Naive thymus-derived CD4-positive, alpha-beta T cell (primary cell): ENCODE measurements at regions of chr12 and their contacts with region 1.

Region 1: DNA sequence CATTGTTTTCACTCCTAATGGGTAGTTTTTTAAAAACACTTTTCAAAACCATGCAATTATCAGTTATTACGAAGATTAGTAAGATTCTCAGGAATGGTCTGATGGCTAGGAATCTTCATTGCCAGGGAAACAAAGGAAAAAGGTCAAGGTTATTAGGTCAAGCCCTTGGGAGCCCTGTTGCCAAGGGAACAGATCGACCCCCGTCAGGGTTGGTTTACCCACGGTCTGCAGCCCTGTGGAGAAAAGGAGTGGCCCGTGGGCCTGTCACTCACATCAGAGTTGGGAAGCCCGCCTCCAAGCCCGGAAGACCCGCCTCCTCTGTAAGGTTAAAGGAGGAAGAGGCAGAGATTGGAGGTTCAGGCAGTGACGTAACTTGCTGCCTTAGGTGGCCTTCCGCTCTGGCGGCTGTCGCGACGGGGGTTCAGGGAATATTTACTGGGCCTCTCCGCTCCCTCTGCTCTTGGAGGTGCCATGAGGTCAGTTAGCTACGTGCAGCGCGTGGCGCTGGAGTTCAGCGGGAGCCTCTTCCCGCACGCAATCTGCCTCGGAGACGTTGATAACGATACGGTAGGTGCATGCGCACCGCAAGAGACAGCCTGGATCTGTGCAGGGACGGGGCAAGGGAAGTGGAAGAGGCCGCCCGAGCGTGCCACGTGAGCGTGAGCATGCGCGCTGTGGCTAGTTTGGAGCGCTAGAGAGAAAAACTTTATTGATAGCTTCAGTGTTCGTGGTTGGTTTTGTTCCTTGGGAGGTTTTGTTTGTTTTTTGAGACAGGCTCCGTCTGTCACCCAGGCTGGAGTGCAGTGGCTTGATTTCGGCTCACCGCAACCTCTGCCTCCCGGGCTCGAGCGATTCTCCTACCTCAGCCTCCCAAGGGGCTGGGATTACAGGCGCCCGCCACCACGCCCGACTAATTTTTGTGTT is at the start of gene ITFG2:
- DNase-seq: peak; percentile 83 to 98 (median 98)
- ATAC-seq: peak; percentile 97
- H3K4me3 ChIP-seq: peak within 1 kb of the TSS; percentile 97
- H3K4me3 Mint-ChIP-seq: peak within 1 kb of the TSS; percentile 81 to 100 (median 99)
- H3K27ac ChIP-seq: peak within 1 kb of the TSS; percentile 88
- H3K27ac Mint-ChIP-seq: peak within 1 kb of the TSS; percentile 97 to 100 (median 100)
- H3K4me1 ChIP-seq: peaks cover 5 to 15% of the 10 kb centered on the region in 2 donors
- H3K4me1 Mint-ChIP-seq: peaks cover 20 to 41% (median 38%) of the 10 kb centered on the region in 7 donors
- H3K27me3 ChIP-seq: no peaks in the 10 kb centered on the region
- H3K27me3 Mint-ChIP-seq: no peaks in the 10 kb centered on the region
- total RNA-seq, gene ITFG2: 50.4 to 156 (median 95.6) TPM

Region 2: GRCh38 chr12:1804545-1805332 is 1007.8 kb before region 1 on chr12:
- CTCF ChIA-PET with region 1: no interaction called
- POLR2A ChIA-PET with region 1: no interaction called
- intact Hi-C with region 1: loop called in 1 of 2 experiments (anchors 1 kb)
- DNase-seq: peak; percentile 58 to 86 (median 79)
- ATAC-seq: peak; percentile 98
- H3K4me3 ChIP-seq: peak overlapping the region; percentile 26
- H3K4me3 Mint-ChIP-seq: peak overlapping the region in 5 of 10 donors; percentile 21 to 44 (median 29)
- H3K27ac ChIP-seq: peak overlapping the region; percentile 63
- H3K27ac Mint-ChIP-seq: peak overlapping the region in 8 of 9 donors; percentile 55 to 90 (median 76)
- H3K4me1 ChIP-seq: peaks cover 6 to 7% of the 10 kb centered on the region in 2 donors
- H3K4me1 Mint-ChIP-seq: peaks cover 5 to 12% (median 6%) of the 10 kb centered on the region in 7 donors
- H3K27me3 ChIP-seq: no peaks in the 10 kb centered on the region
- H3K27me3 Mint-ChIP-seq: no peaks in the 10 kb centered on the region

Region 3: DNA sequence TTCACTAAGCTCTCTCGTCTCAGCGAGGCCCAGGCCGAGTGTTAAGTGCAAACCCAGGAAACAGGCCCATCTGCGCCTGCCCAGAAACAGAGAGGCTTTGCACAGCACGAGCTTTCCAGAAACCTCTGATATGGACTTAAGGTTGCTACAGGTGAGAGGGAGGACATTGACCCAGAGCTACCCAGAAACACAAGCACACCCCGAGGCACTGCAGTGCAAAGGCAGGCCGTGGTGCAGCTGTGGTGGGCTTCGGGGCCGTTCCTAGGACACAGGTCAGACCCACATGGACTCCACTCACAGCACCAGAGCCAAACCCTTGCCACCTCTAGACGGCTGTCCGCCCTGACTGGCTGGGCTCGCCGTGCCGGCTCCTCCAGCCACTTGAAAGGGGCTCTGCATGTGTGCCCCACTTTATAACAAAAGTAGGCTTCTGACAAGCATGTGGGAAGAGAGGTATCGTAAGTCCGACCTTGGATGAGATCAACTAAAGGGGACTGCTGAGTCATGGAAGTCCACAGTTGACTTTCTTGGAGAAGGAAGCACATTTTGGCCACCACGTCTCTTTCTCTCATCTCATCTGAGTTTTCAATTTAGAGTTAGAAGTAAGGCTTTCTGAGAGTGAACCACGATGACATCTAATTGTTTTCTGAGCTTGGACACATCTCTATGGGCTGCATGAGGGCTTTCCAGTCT is 932.3 kb before region 1 on chr12:
- CTCF ChIA-PET with region 1: no interaction called
- POLR2A ChIA-PET with region 1: no interaction called
- intact Hi-C with region 1: no loop called
- DNase-seq: no peak
- ATAC-seq: no peak
- H3K4me3 ChIP-seq: no peak overlapping the region
- H3K4me3 Mint-ChIP-seq: no peak overlapping the region
- H3K27ac ChIP-seq: no peak overlapping the region
- H3K27ac Mint-ChIP-seq: no peak overlapping the region
- H3K4me1 ChIP-seq: no peaks in the 10 kb centered on the region
- H3K4me1 Mint-ChIP-seq: no peaks in the 10 kb centered on the region
- H3K27me3 ChIP-seq: no peaks in the 10 kb centered on the region
- H3K27me3 Mint-ChIP-seq: peaks cover 0 to 10% (median 2%) of the 10 kb centered on the region in 5 donors

Region 4: GRCh38 chr12:2682296-2683251 is 130.0 kb before region 1 on chr12:
- CTCF ChIA-PET with region 1: interaction called, 6 read pairs
- POLR2A ChIA-PET with region 1: interaction called, 4 read pairs
- intact Hi-C with region 1: loop called (anchors 1 kb)
- DNase-seq: peak in 7 of 9 donors; percentile 37 to 70 (median 59)
- ATAC-seq: peak; percentile 71
- H3K4me3 ChIP-seq: no peak overlapping the region
- H3K4me3 Mint-ChIP-seq: peak overlapping the region in 3 of 10 donors; percentile 43 to 67 (median 47)
- H3K27ac ChIP-seq: no peak overlapping the region
- H3K27ac Mint-ChIP-seq: peak overlapping the region; percentile 76 to 98 (median 88)
- H3K4me1 ChIP-seq: no peaks in the 10 kb centered on the region
- H3K4me1 Mint-ChIP-seq: peaks cover 5 to 12% (median 9%) of the 10 kb centered on the region in 7 donors
- H3K27me3 ChIP-seq: no peaks in the 10 kb centered on the region
- H3K27me3 Mint-ChIP-seq: no peaks in the 10 kb centered on the region

Region 5: GRCh38 chr12:2752676-2753371 is 59.7 kb before region 1 on chr12:
- CTCF ChIA-PET with region 1: no interaction called
- POLR2A ChIA-PET with region 1: no interaction called
- intact Hi-C with region 1: loop called (anchors 1 to 2 kb)
- DNase-seq: peak; percentile 62 to 89 (median 80)
- ATAC-seq: peak; percentile 100
- H3K4me3 ChIP-seq: no peak overlapping the region
- H3K4me3 Mint-ChIP-seq: no peak overlapping the region
- H3K27ac ChIP-seq: no peak overlapping the region
- H3K27ac Mint-ChIP-seq: peak overlapping the region in 1 of 9 donors; percentile 23
- H3K4me1 ChIP-seq: no peaks in the 10 kb centered on the region
- H3K4me1 Mint-ChIP-seq: peaks cover 0 to 8% (median 0%) of the 10 kb centered on the region in 7 donors
- H3K27me3 ChIP-seq: no peaks in the 10 kb centered on the region
- H3K27me3 Mint-ChIP-seq: peaks cover 30 to 61% (median 44%) of the 10 kb centered on the region in 5 donors

Region 6: DNA sequence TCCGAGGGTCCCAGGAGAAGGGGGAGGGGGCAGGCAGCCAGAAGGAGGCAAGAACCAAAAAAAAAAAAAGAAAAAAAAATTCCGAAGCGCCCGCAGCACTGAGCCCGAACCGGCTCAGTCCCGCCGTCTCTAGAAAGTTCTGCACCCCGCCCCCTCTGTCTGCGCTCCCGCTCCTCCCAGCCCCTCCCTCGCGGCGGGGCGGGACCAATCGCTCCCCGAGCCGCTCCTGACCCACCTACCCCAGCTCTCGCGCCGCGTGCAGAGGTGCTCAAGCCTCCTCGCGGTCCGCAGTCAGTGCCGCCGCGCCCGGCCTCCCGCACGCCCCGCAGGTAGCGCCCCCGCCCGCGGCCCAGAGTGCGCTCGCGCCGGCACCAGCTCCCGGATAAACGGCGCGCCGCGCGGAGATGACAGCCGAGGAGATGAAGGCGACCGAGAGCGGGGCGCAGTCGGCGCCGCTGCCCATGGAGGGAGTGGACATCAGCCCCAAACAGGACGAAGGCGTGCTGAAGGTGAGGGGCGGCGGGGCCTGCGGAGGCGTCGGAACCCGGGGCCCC is 17.7 kb before region 1 on chr12 and contains the start of gene FKBP4:
- CTCF ChIA-PET with region 1: interaction called, 4 read pairs
- POLR2A ChIA-PET with region 1: interaction called, 65 read pairs
- intact Hi-C with region 1: loop called (anchors 1 kb)
- DNase-seq: peak; percentile 77 to 92 (median 86)
- ATAC-seq: peak; percentile 95
- H3K4me3 ChIP-seq: peak within 1 kb of the TSS; percentile 95
- H3K4me3 Mint-ChIP-seq: peak within 1 kb of the TSS; percentile 88 to 97 (median 94)
- H3K27ac ChIP-seq: peak within 1 kb of the TSS; percentile 73
- H3K27ac Mint-ChIP-seq: peak within 1 kb of the TSS; percentile 48 to 93 (median 84)
- H3K4me1 ChIP-seq: peaks cover 8 to 11% of the 10 kb centered on the region in 2 donors
- H3K4me1 Mint-ChIP-seq: peaks cover 17 to 37% (median 31%) of the 10 kb centered on the region in 7 donors
- H3K27me3 ChIP-seq: no peaks in the 10 kb centered on the region
- H3K27me3 Mint-ChIP-seq: peaks cover 0 to 21% (median 0%) of the 10 kb centered on the region in 5 donors
- total RNA-seq, gene FKBP4: 47.4 to 95.4 (median 54.6) TPM

Region 7: GRCh38 chr12:2890388-2891239 is 78.1 kb after region 1 on chr12 and contains the start of gene TULP3:
- CTCF ChIA-PET with region 1: interaction called, 3 read pairs
- POLR2A ChIA-PET with region 1: interaction called, 3 read pairs
- intact Hi-C with region 1: loop called (anchors 1 kb)
- DNase-seq: peak; percentile 95 to 98 (median 97)
- ATAC-seq: peak; percentile 99
- H3K4me3 ChIP-seq: peak within 1 kb of the TSS; percentile 96
- H3K4me3 Mint-ChIP-seq: peak within 1 kb of the TSS; percentile 93 to 100 (median 98)
- H3K27ac ChIP-seq: peak within 1 kb of the TSS; percentile 89
- H3K27ac Mint-ChIP-seq: peak within 1 kb of the TSS; percentile 81 to 97 (median 97)
- H3K4me1 ChIP-seq: peaks cover 3 to 8% of the 10 kb centered on the region in 2 donors
- H3K4me1 Mint-ChIP-seq: peaks cover 15 to 35% (median 31%) of the 10 kb centered on the region in 7 donors
- H3K27me3 ChIP-seq: no peaks in the 10 kb centered on the region
- H3K27me3 Mint-ChIP-seq: peaks cover 0 to 2% (median 0%) of the 10 kb centered on the region in 5 donors
- total RNA-seq, gene TULP3: 4.7 to 9.6 (median 7.4) TPM

Region 8: GRCh38 chr12:3872800-3873636 is 1060.5 kb after region 1 on chr12 and contains the start of gene PARP11:
- CTCF ChIA-PET with region 1: no interaction called
- POLR2A ChIA-PET with region 1: no interaction called
- intact Hi-C with region 1: loop called in 1 of 2 experiments (anchors 2 kb)
- DNase-seq: peak; percentile 93 to 98 (median 96)
- ATAC-seq: peak; percentile 98
- H3K4me3 ChIP-seq: peak within 1 kb of the TSS; percentile 93
- H3K4me3 Mint-ChIP-seq: peak within 1 kb of the TSS; percentile 90 to 99 (median 94)
- H3K27ac ChIP-seq: peak within 1 kb of the TSS; percentile 96
- H3K27ac Mint-ChIP-seq: peak within 1 kb of the TSS; percentile 95 to 99 (median 98)
- H3K4me1 ChIP-seq: peaks cover 23 to 32% of the 10 kb centered on the region in 2 donors
- H3K4me1 Mint-ChIP-seq: peaks cover 31 to 58% (median 55%) of the 10 kb centered on the region in 7 donors
- H3K27me3 ChIP-seq: no peaks in the 10 kb centered on the region
- H3K27me3 Mint-ChIP-seq: peaks cover 0 to 6% (median 0%) of the 10 kb centered on the region in 5 donors
- total RNA-seq, gene PARP11: 21.5 to 37.4 (median 35.1) TPM